CD8-positive, alpha-beta T cell (primary cell): ENCODE measurements at regions of chr13 and their contacts with region 1.

Region 1: GRCh38 chr13:45879670-45880069 is 28.1 kb upstream of the SIAH3 start:
- DNase-seq: peak in 2 of 9 experiments; percentile 8 to 10
- ATAC-seq: no peak
- H3K4me3 ChIP-seq: no peak overlapping the region
- H3K4me3 Mint-ChIP-seq: no peak overlapping the region
- H3K27ac ChIP-seq: no peak overlapping the region
- H3K27ac Mint-ChIP-seq: no peak overlapping the region
- H3K4me1 ChIP-seq: no peaks in the 10 kb centered on the region
- H3K4me1 Mint-ChIP-seq: no peaks in the 10 kb centered on the region
- H3K27me3 ChIP-seq: no peaks in the 10 kb centered on the region
- H3K27me3 Mint-ChIP-seq: peaks cover 2% of the 10 kb centered on the region
- CTCF ChIP-seq: no peak

Region 2: DNA sequence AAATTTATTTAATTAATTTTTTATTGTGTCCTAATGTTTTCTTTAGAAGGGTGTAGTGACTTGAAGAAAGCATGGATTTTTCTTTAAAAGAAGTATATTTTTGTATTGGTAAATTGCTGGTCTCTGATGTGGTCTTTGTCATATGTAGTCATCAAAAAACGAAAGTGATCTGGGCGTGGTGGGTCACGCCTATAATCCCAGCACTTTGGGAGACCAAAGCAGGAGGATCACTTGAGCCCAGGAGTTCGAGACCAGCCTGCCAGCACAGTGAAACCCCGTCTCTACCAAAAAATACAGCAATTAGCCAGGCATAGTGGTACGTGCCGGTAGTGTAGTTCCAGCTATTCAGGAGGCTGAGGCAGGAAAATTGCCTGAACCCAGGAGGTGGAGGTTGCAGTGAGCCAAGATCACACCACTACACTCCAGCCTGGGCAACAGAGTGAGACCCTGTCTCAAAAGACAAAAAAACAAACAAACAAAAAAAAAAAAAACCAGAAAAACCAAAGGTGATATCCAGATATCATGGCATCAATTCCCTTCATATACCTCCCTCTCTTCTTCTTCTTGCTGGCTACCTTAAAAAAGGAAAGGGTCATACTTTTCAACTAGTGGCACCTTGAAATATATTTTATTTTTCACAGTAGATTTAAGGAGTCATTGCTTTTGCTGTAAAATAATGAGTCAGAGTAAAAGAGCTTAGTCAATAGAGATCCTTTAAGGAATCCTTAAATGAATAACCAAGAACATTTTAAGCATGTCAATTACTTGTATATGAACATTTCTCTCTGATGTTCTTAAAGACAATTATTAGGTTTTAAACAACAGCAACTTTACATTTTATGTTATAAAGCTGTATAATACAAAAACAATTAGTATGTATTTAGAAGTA is 698.7 kb before region 1 on chr13:
- CTCF ChIA-PET with region 1: no interaction called
- POLR2A ChIA-PET with region 1: no interaction called
- intact Hi-C with region 1: no loop called
- DNase-seq: no peak
- ATAC-seq: no peak
- H3K4me3 ChIP-seq: no peak overlapping the region
- H3K4me3 Mint-ChIP-seq: no peak overlapping the region
- H3K27ac ChIP-seq: no peak overlapping the region
- H3K27ac Mint-ChIP-seq: no peak overlapping the region
- H3K4me1 ChIP-seq: no peaks in the 10 kb centered on the region
- H3K4me1 Mint-ChIP-seq: peaks cover 39% of the 10 kb centered on the region
- H3K27me3 ChIP-seq: no peaks in the 10 kb centered on the region
- H3K27me3 Mint-ChIP-seq: no peaks in the 10 kb centered on the region
- CTCF ChIP-seq: no peak

Region 3: DNA sequence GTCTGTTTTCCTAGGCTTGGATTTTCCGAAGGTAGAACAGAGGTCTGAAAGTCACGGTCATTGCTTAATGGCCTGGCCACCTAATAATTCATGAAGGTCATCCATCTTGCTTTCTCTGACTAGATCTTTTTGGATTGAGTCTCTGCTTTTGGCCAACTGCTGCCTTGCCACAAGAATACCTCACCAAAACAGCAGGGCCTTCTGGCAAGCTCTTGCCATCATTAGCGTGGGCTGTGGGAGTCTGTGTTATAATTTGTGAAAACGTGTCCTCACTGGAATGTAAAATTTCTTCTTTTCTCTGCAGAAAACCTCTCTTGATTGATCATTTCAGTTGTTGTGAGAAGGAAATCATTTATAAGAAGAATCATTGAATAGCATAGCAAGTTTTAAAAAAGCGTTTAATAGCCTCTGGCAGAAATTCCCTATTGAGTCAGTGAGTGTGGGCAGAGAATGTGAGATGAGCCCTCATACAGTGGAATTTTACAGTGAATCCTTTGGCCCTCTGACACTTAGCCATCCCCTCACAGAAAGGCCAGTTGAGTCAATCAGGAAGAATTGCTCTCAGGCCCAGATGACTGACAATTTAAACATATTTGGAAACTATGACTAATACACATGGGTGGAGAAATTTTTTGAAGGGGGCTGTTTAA is 221.0 kb before region 1 on chr13:
- CTCF ChIA-PET with region 1: no interaction called
- POLR2A ChIA-PET with region 1: no interaction called
- intact Hi-C with region 1: no loop called
- DNase-seq: no peak
- ATAC-seq: no peak
- H3K4me3 ChIP-seq: no peak overlapping the region
- H3K4me3 Mint-ChIP-seq: no peak overlapping the region
- H3K27ac ChIP-seq: no peak overlapping the region
- H3K27ac Mint-ChIP-seq: no peak overlapping the region
- H3K4me1 ChIP-seq: no peaks in the 10 kb centered on the region
- H3K4me1 Mint-ChIP-seq: peaks cover 3% of the 10 kb centered on the region
- H3K27me3 ChIP-seq: no peaks in the 10 kb centered on the region
- H3K27me3 Mint-ChIP-seq: no peaks in the 10 kb centered on the region
- CTCF ChIP-seq: no peak

Region 4: DNA sequence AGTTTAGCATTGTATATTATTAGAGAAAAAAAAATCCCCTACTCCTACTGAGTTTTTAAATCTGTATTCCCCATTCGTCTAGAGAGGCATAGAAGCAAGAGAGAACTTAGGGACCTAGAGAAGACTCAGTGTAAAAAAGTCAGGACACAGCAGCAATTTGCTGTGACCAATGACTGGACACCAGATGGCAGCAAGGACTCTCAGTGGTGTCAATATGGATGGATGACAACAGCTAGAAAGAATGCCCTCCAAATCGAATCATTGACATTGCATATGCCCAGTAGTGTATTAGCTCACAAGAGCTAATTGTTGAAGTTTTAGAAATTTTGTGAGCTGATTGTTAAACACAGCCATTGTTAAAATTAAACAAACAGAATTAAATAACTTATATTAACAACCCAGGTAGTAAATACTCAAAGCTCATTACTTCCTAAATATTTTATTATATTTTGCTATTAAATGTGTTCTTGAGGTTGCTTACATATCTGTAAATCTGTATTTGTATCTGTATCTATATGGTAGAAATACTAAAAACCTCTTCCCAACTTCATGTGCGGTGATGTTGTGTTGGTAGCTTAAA is 72.1 kb before region 1 on chr13:
- CTCF ChIA-PET with region 1: interaction called, 10 read pairs
- POLR2A ChIA-PET with region 1: no interaction called
- intact Hi-C with region 1: loop called (anchors 1 to 5 kb)
- DNase-seq: peak in 4 of 9 experiments; percentile 26 to 54 (median 39)
- ATAC-seq: peak; percentile 54
- H3K4me3 ChIP-seq: no peak overlapping the region
- H3K4me3 Mint-ChIP-seq: no peak overlapping the region
- H3K27ac ChIP-seq: no peak overlapping the region
- H3K27ac Mint-ChIP-seq: no peak overlapping the region
- H3K4me1 ChIP-seq: no peaks in the 10 kb centered on the region
- H3K4me1 Mint-ChIP-seq: peaks cover 6% of the 10 kb centered on the region
- H3K27me3 ChIP-seq: no peaks in the 10 kb centered on the region
- H3K27me3 Mint-ChIP-seq: no peaks in the 10 kb centered on the region
- CTCF ChIP-seq: peak; percentile 16

Region 5: DNA sequence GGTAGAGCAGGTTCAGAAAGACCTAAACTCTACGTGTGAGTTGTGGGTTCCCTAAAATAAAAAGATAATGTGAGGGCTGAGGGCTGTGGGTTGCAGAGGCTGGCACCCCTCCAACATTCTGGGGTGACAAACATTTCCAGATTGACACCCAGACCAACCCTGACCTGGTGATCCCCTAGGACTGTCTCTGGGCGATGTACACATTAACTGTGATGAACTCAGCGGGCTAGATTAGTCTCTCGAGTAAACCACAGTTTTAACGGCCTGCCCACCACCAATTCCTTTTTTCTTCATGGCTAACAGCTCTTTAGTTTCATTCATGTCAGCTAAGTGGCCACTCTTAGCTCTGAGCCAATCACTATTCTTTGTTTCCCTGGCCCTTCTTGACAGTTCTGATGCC is 52.9 kb before region 1 on chr13:
- CTCF ChIA-PET with region 1: no interaction called
- POLR2A ChIA-PET with region 1: no interaction called
- intact Hi-C with region 1: no loop called
- DNase-seq: no peak
- ATAC-seq: no peak
- H3K4me3 ChIP-seq: no peak overlapping the region
- H3K4me3 Mint-ChIP-seq: no peak overlapping the region
- H3K27ac ChIP-seq: no peak overlapping the region
- H3K27ac Mint-ChIP-seq: no peak overlapping the region
- H3K4me1 ChIP-seq: no peaks in the 10 kb centered on the region
- H3K4me1 Mint-ChIP-seq: peaks cover 2% of the 10 kb centered on the region
- H3K27me3 ChIP-seq: no peaks in the 10 kb centered on the region
- H3K27me3 Mint-ChIP-seq: no peaks in the 10 kb centered on the region
- CTCF ChIP-seq: no peak

Region 6: DNA sequence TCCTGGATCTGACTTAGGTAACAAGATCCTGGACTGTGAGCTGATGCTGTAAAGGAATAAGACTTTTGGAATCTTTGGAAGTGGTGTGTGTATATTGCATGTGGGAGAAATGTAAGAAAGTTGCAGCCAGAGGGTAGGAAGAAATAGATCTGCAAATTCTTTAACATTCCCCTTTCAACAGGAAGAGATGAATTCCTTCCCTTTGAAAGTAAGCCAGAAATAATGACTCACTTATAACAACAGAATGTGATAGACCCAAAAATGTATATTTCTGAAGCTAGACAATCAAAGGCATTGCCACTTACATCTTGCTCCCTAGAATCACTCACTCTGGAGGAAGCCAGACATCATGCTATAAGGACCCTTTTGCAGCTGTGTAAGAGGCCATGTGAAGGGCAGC is 18.3 kb before region 1 on chr13:
- CTCF ChIA-PET with region 1: no interaction called
- POLR2A ChIA-PET with region 1: no interaction called
- intact Hi-C with region 1: loop called in 1 of 2 experiments (anchors 1 kb)
- DNase-seq: no peak
- ATAC-seq: no peak
- H3K4me3 ChIP-seq: no peak overlapping the region
- H3K4me3 Mint-ChIP-seq: no peak overlapping the region
- H3K27ac ChIP-seq: no peak overlapping the region
- H3K27ac Mint-ChIP-seq: no peak overlapping the region
- H3K4me1 ChIP-seq: no peaks in the 10 kb centered on the region
- H3K4me1 Mint-ChIP-seq: peaks cover 4% of the 10 kb centered on the region
- H3K27me3 ChIP-seq: no peaks in the 10 kb centered on the region
- H3K27me3 Mint-ChIP-seq: no peaks in the 10 kb centered on the region
- CTCF ChIP-seq: no peak

Region 7: DNA sequence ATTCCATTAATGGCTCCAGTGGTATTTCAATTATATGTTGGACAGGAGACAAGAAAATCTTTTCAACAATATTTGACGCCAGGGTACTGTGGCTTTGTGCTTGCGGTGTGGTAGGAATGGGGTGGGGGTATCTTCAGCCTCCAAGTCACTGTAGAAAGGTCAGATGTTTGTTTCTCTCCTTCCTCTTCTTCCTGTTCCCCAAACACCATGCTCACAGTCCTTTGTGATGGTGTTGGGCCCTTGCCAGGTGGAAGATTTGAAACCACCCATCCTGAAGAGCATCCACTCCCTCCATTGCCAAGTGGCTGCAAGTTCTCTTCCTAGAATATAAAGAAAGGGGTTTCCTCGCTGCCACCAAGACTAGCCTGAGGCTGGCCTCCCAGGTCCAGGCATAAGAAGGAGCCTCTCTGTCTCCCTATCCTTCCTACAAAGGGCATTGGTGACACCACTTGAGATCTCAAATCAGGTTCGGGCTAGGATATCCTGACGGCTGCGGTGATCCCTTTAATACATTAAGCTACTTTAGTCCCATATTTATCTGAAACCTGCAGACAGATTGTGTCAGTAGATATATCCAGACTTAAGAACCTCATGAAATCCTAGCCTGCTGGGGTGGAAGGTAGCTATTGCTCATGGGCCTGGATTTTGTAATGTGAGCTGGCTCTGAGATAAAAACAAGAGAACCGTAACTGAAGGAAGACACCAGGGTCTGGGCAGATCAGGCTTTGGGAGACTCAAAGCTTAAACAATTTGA is 36.2 kb after region 1 on chr13:
- CTCF ChIA-PET with region 1: no interaction called
- POLR2A ChIA-PET with region 1: no interaction called
- intact Hi-C with region 1: no loop called
- DNase-seq: no peak
- ATAC-seq: no peak
- H3K4me3 ChIP-seq: no peak overlapping the region
- H3K4me3 Mint-ChIP-seq: no peak overlapping the region
- H3K27ac ChIP-seq: no peak overlapping the region
- H3K27ac Mint-ChIP-seq: no peak overlapping the region
- H3K4me1 ChIP-seq: no peaks in the 10 kb centered on the region
- H3K4me1 Mint-ChIP-seq: no peaks in the 10 kb centered on the region
- H3K27me3 ChIP-seq: no peaks in the 10 kb centered on the region
- H3K27me3 Mint-ChIP-seq: no peaks in the 10 kb centered on the region
- CTCF ChIP-seq: no peak